GM12878 (cell line): ENCODE measurements at regions of chr9 and their contacts with region 1.

Region 1: DNA sequence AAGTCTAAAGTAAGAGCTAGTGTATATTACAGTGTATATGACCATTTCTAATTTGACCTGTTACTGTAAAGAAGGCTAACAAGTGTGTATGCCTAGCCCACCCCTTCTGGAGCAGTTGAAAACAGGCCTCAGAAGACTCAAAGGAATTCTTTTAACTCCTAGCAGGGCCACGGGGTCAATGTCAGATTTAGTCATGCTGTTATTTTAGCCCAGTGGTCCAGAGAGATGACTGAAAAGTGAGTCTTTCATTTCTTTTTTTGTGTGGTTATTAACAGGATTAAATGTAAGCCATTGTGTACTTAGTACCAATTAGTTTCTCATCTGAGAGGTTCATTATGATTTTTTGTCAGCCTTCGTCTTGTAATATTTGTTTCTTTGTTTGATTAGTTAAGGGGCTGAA is 24.4 kb downstream of the ZCCHC7 start:
- DNase-seq: peak; percentile 82
- ATAC-seq: peak; percentile 75
- H3K4me3 ChIP-seq: peak overlapping the region; percentile 9; the same call in 1 of the 2 replicates
- H3K27ac ChIP-seq: peak overlapping the region; percentile 82
- H3K4me1 ChIP-seq: peaks cover 18% of the 10 kb centered on the region; the same call in 1 of the 2 replicates
- H3K27me3 ChIP-seq: no peaks in the 10 kb centered on the region
- CTCF ChIP-seq: no peak
- EP300 ChIP-seq: peak; percentile 96 to 98
- POLR2A ChIP-seq: no peak
- RAD21 ChIP-seq: 0 out of 2 replicates have a peak, but pooled peaks have one; percentile 25

Region 2: GRCh38 chr9:36690412-36691168 is 454.2 kb before region 1 on chr9:
- CTCF ChIA-PET with region 1: no interaction called
- POLR2A ChIA-PET with region 1: no interaction called
- RAD21 ChIA-PET with region 1: no interaction called
- SMC1A ChIA-PET with region 1: no interaction called
- in situ Hi-C with region 1: no loop called
- intact Hi-C with region 1: no loop called
- DNase-seq: no peak
- ATAC-seq: peak; percentile 71
- H3K4me3 ChIP-seq: no peak overlapping the region
- H3K27ac ChIP-seq: no peak overlapping the region
- H3K4me1 ChIP-seq: 0 out of 2 replicates have a peak, but pooled peaks cover 2% of the 10 kb centered on the region
- H3K27me3 ChIP-seq: no peaks in the 10 kb centered on the region
- CTCF ChIP-seq: no peak
- EP300 ChIP-seq: no peak
- POLR2A ChIP-seq: no peak
- RAD21 ChIP-seq: no peak

Region 3: DNA sequence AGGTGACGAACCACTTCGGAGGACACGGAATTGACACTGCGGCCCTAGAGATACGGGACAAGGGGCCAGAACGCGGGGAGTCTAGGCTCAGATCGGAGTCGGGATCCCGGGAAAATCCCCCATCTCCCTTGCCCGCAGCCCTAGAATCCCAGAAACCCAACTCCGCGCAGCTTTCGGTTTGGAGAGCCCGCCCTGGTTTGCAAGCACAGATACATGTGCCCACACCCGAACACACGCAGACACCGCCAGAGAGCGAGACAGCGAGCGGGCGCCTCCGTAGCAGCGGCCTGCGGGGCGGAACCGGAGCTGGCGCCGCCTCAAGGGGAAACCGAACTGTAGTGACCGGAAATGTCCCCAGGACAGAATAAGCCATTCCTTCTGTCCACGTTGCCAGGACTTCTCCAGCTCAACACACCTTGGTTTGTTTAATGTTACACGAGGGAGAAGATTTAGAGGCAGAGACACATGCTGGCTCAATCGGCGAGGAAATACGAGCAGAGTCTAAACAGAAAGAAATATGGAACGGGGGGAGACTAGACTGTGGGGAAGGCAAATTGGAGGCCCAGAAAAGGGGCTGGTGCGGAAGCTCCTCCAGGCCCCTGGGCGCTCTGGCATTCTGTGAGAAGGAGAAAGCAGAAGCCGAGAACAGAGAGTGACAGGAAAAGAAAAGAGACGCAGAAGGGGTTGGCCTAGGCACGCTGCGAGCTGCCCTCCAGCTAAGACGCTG is 107.8 kb before region 1 on chr9:
- CTCF ChIA-PET with region 1: interaction called, 4 read pairs
- POLR2A ChIA-PET with region 1: interaction called, 7 read pairs
- RAD21 ChIA-PET with region 1: interaction called, 4 read pairs
- SMC1A ChIA-PET with region 1: interaction called, 17 read pairs
- in situ Hi-C with region 1: no loop called
- intact Hi-C with region 1: loop called (anchors 2 kb)
- DNase-seq: no peak
- ATAC-seq: peak; percentile 52
- H3K4me3 ChIP-seq: peak overlapping the region; percentile 96
- H3K27ac ChIP-seq: peak overlapping the region; percentile 92
- H3K4me1 ChIP-seq: peaks cover 8% of the 10 kb centered on the region
- H3K27me3 ChIP-seq: no peaks in the 10 kb centered on the region
- CTCF ChIP-seq: 0 out of 6 replicates have a peak, but pooled peaks of 1 of the 3 experiments have one; percentile 2
- EP300 ChIP-seq: no peak
- POLR2A ChIP-seq: 0 out of 2 replicates have a peak, but pooled peaks have one; percentile 2
- RAD21 ChIP-seq: no peak

Region 4: GRCh38 chr9:37134166-37134565 is 10.6 kb before region 1 on chr9:
- CTCF ChIA-PET with region 1: interaction called, 3 read pairs
- POLR2A ChIA-PET with region 1: interaction called, 50 read pairs
- RAD21 ChIA-PET with region 1: interaction called, 76 read pairs
- SMC1A ChIA-PET with region 1: interaction called, 99 read pairs
- in situ Hi-C with region 1: no loop called
- intact Hi-C with region 1: no loop called
- DNase-seq: no peak
- ATAC-seq: no peak
- H3K4me3 ChIP-seq: no peak overlapping the region
- H3K27ac ChIP-seq: no peak overlapping the region
- H3K4me1 ChIP-seq: peaks cover 11% of the 10 kb centered on the region; the same call in 1 of the 2 replicates
- H3K27me3 ChIP-seq: no peaks in the 10 kb centered on the region
- CTCF ChIP-seq: no peak
- EP300 ChIP-seq: no peak
- POLR2A ChIP-seq: no peak
- RAD21 ChIP-seq: no peak

Region 5: GRCh38 chr9:37187713-37188439 is 43.1 kb after region 1 on chr9:
- CTCF ChIA-PET with region 1: interaction called, 6 read pairs
- POLR2A ChIA-PET with region 1: interaction called, 5 read pairs
- RAD21 ChIA-PET with region 1: interaction called, 62 read pairs
- SMC1A ChIA-PET with region 1: interaction called, 17 read pairs
- in situ Hi-C with region 1: no loop called
- intact Hi-C with region 1: loop called (anchors 2 kb)
- DNase-seq: peak; percentile 75
- ATAC-seq: peak; percentile 81
- H3K4me3 ChIP-seq: peak overlapping the region; percentile 61
- H3K27ac ChIP-seq: peak overlapping the region; percentile 83
- H3K4me1 ChIP-seq: peaks cover 47% of the 10 kb centered on the region
- H3K27me3 ChIP-seq: no peaks in the 10 kb centered on the region
- CTCF ChIP-seq: no peak
- EP300 ChIP-seq: peak; percentile 31 to 66; a peak in 2 of 4 replicates
- POLR2A ChIP-seq: no peak
- RAD21 ChIP-seq: no peak

Region 6: DNA sequence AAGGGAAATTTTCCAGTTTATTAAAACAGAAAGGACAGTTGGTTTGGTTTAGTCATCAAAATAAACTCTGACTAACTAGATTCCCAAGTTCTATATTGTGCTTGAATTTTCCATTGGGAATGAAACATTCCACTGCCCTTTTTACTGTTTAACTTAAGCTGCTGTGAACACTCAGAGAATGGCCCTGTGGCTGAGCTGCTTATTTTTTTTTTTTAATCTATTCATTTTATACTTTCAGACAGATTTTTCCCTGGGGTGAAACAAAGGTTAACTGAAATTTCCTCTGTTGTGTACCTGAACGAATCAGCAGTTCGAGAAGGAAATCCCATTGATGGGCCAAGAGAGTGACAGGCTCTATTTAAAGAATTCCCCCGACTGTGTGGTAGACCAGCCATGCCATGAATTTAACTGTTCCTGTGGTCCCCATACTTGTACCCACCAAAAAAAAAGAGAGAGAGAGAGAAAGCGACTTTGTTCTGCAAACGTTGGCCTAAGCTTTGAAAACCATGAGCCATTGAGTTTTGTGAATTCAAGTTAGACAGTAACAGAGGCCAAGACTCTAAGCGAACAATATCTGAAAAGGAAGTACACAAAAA is 139.1 kb after region 1 on chr9:
- CTCF ChIA-PET with region 1: no interaction called
- POLR2A ChIA-PET with region 1: interaction called, 3 read pairs
- RAD21 ChIA-PET with region 1: interaction called, 15 read pairs
- SMC1A ChIA-PET with region 1: interaction called, 15 read pairs
- in situ Hi-C with region 1: no loop called
- intact Hi-C with region 1: no loop called
- DNase-seq: peak; percentile 72
- ATAC-seq: peak; percentile 63
- H3K4me3 ChIP-seq: peak overlapping the region; percentile 57
- H3K27ac ChIP-seq: peak overlapping the region; percentile 84
- H3K4me1 ChIP-seq: peaks cover 13% of the 10 kb centered on the region
- H3K27me3 ChIP-seq: no peaks in the 10 kb centered on the region
- CTCF ChIP-seq: no peak
- EP300 ChIP-seq: 0 out of 4 replicates have a peak, but pooled peaks of 1 of the 2 experiments have one; percentile 37
- POLR2A ChIP-seq: no peak
- RAD21 ChIP-seq: no peak

Region 7: DNA sequence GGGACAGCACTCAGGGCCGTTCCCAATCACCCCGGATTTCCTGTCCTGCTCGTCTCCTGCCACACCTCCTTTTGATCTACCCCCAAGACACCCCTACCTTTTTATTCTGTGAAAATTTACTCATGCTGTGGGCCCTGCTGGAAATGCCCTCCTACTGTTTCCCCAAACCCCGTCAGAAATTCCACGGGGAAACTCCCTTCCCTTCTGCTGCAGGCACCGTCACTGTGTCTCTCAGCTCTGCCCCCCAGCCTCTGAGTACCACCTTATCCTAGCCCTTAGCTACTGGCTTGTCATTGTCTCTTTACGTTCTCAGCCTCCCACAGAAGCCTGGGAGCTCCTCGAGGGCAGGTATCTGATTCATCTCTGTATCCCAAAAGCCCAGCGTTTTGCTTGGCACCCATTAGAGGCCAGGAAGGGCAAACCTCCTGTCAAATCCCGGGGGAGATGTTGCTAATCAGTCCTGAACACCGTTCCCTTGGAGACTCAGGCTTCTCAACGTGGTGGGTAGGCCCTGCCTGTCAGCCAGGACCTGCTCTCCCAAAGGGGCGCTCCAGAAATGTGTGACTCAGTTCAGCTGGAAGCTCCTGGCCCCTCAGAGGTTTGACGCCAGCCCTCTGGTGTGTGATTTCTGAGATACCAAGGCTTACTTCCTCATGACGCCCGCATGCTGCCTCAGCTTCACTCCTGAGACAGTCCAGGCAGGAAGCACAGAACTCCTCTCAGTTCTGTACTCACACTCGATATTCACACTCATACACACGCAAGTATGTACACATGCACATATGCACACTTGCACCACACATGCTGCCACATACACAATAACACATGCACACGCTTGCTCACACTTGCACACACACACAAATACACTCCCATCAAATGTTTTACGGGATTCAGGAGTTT is 227.1 kb after region 1 on chr9:
- CTCF ChIA-PET with region 1: no interaction called
- POLR2A ChIA-PET with region 1: no interaction called
- RAD21 ChIA-PET with region 1: interaction called, 4 read pairs
- SMC1A ChIA-PET with region 1: interaction called, 3 read pairs
- in situ Hi-C with region 1: no loop called
- intact Hi-C with region 1: loop called (anchors 2 kb)
- DNase-seq: peak; percentile 63
- ATAC-seq: peak; percentile 44
- H3K4me3 ChIP-seq: no peak overlapping the region
- H3K27ac ChIP-seq: peak overlapping the region; percentile 97
- H3K4me1 ChIP-seq: peaks cover 78% of the 10 kb centered on the region
- H3K27me3 ChIP-seq: no peaks in the 10 kb centered on the region
- CTCF ChIP-seq: no peak
- EP300 ChIP-seq: peak in 1 of 2 experiments; percentile 33; a peak in 2 of 4 replicates
- POLR2A ChIP-seq: peak; percentile 7; the same call in 1 of the 2 replicates
- RAD21 ChIP-seq: no peak